ENCODE measurements at regions of chr11 and their contacts with region 1.

Region 1: GRCh38 chr11:67468835-67469811 is at the start of gene TMEM134:
- DNase-seq: peak; percentile 58 to 95
- H3K4me3 ChIP-seq: peak within 1 kb of the TSS; percentile 61 to 69
- H3K27ac ChIP-seq: peak within 1 kb of the TSS; percentile 71 to 89
- H3K4me1 ChIP-seq: peaks cover 3 to 19% of the 10 kb centered on the region in 2 donors
- H3K27me3 ChIP-seq: no peaks in the 10 kb centered on the region
- CTCF ChIP-seq: peak; percentile 59 to 64 (median 61)
- total RNA-seq, gene TMEM134: 189 TPM

Region 2: DNA sequence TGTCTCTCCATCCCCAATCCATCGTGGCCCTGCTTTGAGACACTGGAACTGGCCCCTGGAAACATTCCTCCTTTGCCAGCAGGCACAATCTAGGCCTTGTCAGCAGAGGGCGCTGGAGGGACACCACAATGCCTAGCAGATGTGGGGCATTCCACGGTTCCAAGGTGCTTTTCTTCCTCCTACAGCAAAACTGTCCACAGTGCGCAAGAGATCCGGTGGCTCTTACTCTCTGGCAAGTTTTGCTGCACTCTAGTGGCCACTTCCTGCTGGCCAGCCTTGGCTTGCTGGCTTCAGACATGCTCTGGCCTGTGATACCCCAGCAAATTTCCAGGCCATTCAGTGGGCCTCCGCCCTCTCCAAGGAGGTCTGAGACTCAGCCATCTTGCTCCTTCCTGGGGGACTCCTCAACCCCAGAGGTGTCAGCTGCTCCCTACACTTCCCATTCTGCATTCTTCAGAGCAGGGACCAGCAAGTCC is 774.4 kb before region 1 on chr11:
- intact Hi-C with region 1: no loop called
- DNase-seq: peak; percentile 50 to 92
- H3K4me3 ChIP-seq: no peak overlapping the region
- H3K27ac ChIP-seq: no peak overlapping the region
- H3K4me1 ChIP-seq: no peaks in the 10 kb centered on the region
- H3K27me3 ChIP-seq: no peaks in the 10 kb centered on the region
- CTCF ChIP-seq: peak; percentile 88 to 93 (median 90)

Region 3: GRCh38 chr11:67428052-67428914 is 40.8 kb before region 1 on chr11 and contains the start of gene RPS6KB2:
- intact Hi-C with region 1: loop called (anchors 1 kb)
- DNase-seq: peak; percentile 96 to 99
- H3K4me3 ChIP-seq: peak within 1 kb of the TSS; percentile 75 to 94
- H3K27ac ChIP-seq: peak within 1 kb of the TSS; percentile 86 to 91
- H3K4me1 ChIP-seq: peaks cover 6 to 16% of the 10 kb centered on the region in 2 donors
- H3K27me3 ChIP-seq: no peaks in the 10 kb centered on the region
- CTCF ChIP-seq: no peak
- total RNA-seq, gene RPS6KB2: 72.3 TPM

Region 4: GRCh38 chr11:67442504-67443405 is 26.4 kb before region 1 on chr11:
- intact Hi-C with region 1: loop called (anchors 1 kb)
- DNase-seq: no peak
- H3K4me3 ChIP-seq: peak overlapping the region; percentile 89 to 99
- H3K27ac ChIP-seq: peak overlapping the region; percentile 94 to 98
- H3K4me1 ChIP-seq: peaks cover 8 to 13% of the 10 kb centered on the region in 2 donors
- H3K27me3 ChIP-seq: no peaks in the 10 kb centered on the region
- CTCF ChIP-seq: no peak

Region 5: DNA sequence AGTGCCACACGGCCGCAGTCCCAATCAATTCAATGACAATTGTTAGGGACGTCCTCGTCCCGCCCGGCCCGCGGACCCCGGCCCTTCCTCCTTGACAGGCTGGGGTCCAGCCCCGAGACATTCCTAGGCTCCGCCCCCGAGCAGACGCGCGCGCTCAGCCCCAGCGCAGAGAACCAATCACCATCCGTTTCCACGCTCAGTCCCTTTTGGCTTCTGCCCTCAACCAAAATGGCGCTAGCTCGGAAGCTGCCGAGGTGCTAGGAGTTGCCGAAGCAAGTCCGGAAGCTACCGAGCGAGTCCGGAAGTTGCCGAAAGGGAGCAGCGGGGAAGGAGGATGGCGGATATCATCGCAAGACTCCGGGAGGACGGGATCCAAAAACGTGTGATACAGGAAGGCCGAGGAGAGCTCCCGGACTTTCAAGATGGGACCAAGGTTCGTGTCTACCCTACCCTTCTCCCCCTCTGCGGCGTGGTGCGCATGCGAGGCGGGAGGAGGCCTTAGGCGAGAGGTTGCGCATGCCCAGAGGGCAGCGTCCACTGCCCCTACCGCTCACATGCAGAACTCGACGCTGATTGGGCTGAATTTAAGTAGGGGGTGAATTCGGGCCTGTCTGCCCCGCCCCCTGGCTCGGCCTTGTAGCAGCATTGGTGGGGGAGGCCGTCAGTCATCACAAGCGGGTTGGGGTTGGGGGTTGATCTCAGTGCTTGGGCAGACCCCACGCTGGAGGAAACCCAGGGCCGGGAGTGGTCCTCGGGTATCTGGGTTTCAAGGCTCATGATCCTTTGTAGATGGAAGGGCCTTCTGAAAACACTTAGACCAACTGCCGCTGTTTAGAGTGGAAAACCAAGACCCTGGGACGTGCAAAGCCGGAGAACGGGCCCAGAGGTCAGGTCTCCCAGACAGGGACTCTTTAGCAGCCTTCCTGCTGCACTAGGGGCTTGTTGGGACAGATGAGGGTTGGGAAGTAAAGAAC is 14.0 kb after region 1 on chr11 and contains the start of gene AIP:
- intact Hi-C with region 1: loop called (anchors 1 kb)
- DNase-seq: peak; percentile 92 to 99
- H3K4me3 ChIP-seq: peak within 1 kb of the TSS; percentile 53 to 66
- H3K27ac ChIP-seq: peak within 1 kb of the TSS; percentile 84 to 87
- H3K4me1 ChIP-seq: peaks cover 7 to 15% of the 10 kb centered on the region in 2 donors
- H3K27me3 ChIP-seq: no peaks in the 10 kb centered on the region
- CTCF ChIP-seq: peak; percentile 20 to 28 (median 22)
- total RNA-seq, gene AIP: 116 TPM

Region 6: GRCh38 chr11:67588136-67588503 is 119.0 kb after region 1 on chr11:
- intact Hi-C with region 1: no loop called
- DNase-seq: no peak
- H3K4me3 ChIP-seq: no peak overlapping the region
- H3K27ac ChIP-seq: no peak overlapping the region
- H3K4me1 ChIP-seq: peaks cover 11 to 15% of the 10 kb centered on the region in 2 donors
- H3K27me3 ChIP-seq: no peaks in the 10 kb centered on the region
- CTCF ChIP-seq: no peak

Measured in ascending aorta (tissue), 2 donors.